Left cardiac atrium (tissue), 4 donors: ENCODE measurements at regions of chr1 and their contacts with region 1.

Region 1: DNA sequence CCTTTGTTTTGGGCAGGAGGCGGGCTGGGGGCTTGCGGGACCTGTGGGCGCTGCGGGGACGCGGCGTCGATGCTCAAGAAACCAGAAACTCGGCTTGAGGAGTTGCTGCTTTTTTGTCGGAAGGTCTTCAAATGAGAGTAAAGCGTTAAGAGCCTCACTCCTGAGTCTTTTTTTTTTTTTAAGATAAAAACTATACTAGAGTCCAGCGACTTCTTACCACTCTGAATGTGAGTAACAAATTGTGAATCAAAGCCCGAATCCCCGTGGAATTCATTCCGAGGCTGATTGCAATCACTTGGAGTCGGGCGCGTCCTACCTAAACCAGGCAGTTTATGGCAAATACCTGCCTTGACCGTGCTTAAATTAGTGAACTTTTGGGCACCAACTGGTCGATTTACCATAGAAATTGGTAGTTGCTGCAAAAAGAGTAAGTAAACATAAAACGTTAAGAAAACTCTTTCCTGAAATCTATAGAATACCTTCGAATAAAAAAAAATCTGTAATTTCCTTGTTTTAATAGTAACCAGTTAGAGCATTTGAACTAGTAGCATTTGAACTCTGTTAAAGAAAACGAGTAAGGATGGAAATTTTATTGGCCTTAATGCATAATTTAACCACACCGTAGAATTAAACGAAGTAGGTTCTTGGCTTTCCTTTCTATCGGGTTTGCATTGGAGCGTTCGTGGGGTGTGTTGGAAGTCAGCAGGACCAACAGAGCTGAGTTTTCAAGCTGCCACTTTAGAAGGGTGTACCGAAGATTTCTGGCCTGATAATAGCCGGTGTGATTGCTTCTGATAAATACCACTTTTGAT is 769 bp downstream of the GPSM2 start:
- DNase-seq: no peak
- ATAC-seq: peak in 1 of 2 donors; percentile 8

Region 2: DNA sequence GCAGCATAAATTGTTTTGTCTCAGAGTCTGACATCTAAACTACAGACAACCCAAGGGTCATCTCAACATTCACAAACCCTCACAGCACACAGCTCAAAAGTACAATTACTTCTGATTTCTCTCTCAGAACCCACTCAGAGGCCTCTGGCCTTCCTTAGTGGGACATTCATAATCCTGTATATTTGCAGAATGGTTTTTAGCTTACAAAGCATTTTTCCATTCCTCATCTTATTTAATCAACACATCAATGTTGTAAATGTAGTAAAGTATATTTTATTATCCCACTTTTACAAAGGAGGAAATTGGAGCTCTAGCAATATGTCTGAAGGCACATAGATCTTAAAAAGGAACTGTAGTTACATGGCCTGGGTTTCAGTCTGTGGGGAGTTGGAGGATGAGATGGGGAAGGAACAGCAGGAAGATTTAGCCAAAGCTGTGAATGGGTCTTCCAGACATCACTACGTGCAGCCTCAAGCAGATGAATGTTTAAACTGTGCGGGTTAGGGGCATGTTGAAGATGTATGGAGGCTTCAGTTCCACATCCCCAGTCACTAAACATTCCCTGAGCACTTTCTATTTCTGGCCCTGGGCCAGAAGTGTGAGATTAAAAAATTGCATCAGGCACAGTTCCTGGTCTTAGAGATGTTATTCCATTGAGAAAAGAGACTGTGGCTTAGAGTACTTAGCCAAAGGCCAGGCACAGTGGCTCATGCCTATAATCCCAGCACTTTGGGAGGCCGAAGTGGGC is 34.0 kb before region 1 on chr1:
- intact Hi-C with region 1: loop called in 1 of 2 experiments (anchors 5 kb)
- DNase-seq: no peak
- ATAC-seq: no peak

Region 3: GRCh38 chr1:109161858-109162606 is 284.5 kb after region 1 on chr1:
- intact Hi-C with region 1: no loop called
- DNase-seq: peak; percentile 39
- ATAC-seq: peak; percentile 82 to 85

Region 4: GRCh38 chr1:109975718-109976117 is 1098.2 kb after region 1 on chr1:
- intact Hi-C with region 1: no loop called
- DNase-seq: no peak
- ATAC-seq: peak; percentile 10 to 26